Naive thymus-derived CD8-positive, alpha-beta T cell (primary cell): ENCODE measurements at regions of chr3 and their contacts with region 1.

Region 1: GRCh38 chr3:57555738-57556458 is at the start of gene PDE12:
- DNase-seq: peak; percentile 62 to 97 (median 78)
- ATAC-seq: peak; percentile 72 to 81
- H3K4me3 Mint-ChIP-seq: peak within 1 kb of the TSS; percentile 74 to 100 (median 95)
- H3K27ac Mint-ChIP-seq: peak within 1 kb of the TSS; percentile 97 to 100 (median 99)
- H3K4me1 Mint-ChIP-seq: peaks cover 7 to 47% (median 37%) of the 10 kb centered on the region in 4 donors
- H3K27me3 Mint-ChIP-seq: no peaks in the 10 kb centered on the region
- polyA plus RNA-seq, gene PDE12: 11.3 to 17.5 (median 14.1) TPM

Region 2: DNA sequence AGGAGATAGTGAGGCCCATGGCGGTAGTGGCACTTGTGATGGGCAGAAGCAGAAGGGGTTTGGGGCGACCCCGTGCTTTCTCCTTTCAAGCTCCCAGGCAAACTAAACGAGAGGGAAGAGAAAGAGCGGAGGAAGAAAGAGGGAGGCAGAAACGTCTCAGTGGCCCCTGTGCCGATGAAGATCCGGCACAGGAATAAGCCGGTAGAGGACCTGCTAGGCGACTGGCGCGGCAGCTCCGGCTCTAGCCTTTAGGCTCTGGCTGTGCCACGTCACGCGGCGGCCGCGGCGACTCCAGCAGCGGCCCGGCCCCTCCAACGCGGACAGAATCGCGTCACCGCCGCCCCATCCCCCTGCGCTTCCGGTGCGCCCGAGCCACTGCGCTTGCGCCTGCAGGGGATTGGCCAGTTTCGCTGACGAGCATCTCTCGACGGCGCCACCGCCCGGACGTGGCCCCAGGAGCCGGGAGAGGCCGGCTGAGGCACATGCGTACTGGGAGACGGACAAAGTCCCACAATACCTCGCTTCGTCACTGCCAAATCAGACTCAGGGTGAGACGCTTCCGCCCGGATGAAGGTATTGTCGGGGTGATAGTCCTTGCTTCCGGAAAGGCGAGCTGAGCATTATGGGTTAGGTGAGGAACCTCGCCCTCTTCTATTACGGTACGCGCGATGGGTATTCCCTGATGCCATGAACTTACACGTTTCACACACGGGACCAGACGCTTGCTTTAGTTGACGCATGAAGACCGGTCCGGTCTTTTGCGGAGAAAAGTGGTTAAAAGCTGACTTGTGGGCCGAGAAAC is 41.4 kb after region 1 on chr3 and contains the start of gene ARF4:
- POLR2A ChIA-PET with region 1: interaction called, 73 read pairs
- DNase-seq: peak; percentile 97 to 100 (median 100)
- ATAC-seq: peak; percentile 84 to 89
- H3K4me3 Mint-ChIP-seq: peak within 1 kb of the TSS; percentile 96 to 99 (median 98)
- H3K27ac Mint-ChIP-seq: peak within 1 kb of the TSS; percentile 97 to 100 (median 99)
- H3K4me1 Mint-ChIP-seq: peaks cover 22 to 59% (median 56%) of the 10 kb centered on the region in 4 donors
- H3K27me3 Mint-ChIP-seq: no peaks in the 10 kb centered on the region
- polyA plus RNA-seq, gene ARF4: 112 to 116 (median 115) TPM

Region 3: GRCh38 chr3:57755668-57756527 is 200.0 kb after region 1 on chr3 and contains the start of gene SLMAP:
- POLR2A ChIA-PET with region 1: interaction called, 15 read pairs
- DNase-seq: peak; percentile 86 to 98 (median 95)
- ATAC-seq: peak; percentile 93 to 94
- H3K4me3 Mint-ChIP-seq: peak within 1 kb of the TSS; percentile 91 to 98 (median 94)
- H3K27ac Mint-ChIP-seq: peak within 1 kb of the TSS; percentile 94 to 98 (median 96)
- H3K4me1 Mint-ChIP-seq: peaks cover 4 to 46% (median 37%) of the 10 kb centered on the region in 4 donors
- H3K27me3 Mint-ChIP-seq: no peaks in the 10 kb centered on the region
- polyA plus RNA-seq, gene SLMAP: 19.6 to 24.5 (median 23.7) TPM